Heart right ventricle (tissue), 16 donors: ENCODE measurements at regions of chr20 and their contacts with region 1.

Region 1: GRCh38 chr20:51492167-51493092 is 50.1 kb downstream of the NFATC2 start:
- DNase-seq: peak; percentile 68 to 82
- ATAC-seq: peak; percentile 67 to 92 (median 86)
- H3K4me3 ChIP-seq: peak overlapping the region in 9 of 10 donors; percentile 23 to 50 (median 39)
- H3K27ac ChIP-seq: peak overlapping the region in 8 of 10 donors; percentile 1 to 55 (median 40)
- H3K4me1 ChIP-seq: peaks cover 9 to 56% (median 25%) of the 10 kb centered on the region in 9 donors
- H3K27me3 ChIP-seq: peaks cover 0 to 11% (median 0%) of the 10 kb centered on the region in 7 donors
- CTCF ChIP-seq: no peak

Region 2: DNA sequence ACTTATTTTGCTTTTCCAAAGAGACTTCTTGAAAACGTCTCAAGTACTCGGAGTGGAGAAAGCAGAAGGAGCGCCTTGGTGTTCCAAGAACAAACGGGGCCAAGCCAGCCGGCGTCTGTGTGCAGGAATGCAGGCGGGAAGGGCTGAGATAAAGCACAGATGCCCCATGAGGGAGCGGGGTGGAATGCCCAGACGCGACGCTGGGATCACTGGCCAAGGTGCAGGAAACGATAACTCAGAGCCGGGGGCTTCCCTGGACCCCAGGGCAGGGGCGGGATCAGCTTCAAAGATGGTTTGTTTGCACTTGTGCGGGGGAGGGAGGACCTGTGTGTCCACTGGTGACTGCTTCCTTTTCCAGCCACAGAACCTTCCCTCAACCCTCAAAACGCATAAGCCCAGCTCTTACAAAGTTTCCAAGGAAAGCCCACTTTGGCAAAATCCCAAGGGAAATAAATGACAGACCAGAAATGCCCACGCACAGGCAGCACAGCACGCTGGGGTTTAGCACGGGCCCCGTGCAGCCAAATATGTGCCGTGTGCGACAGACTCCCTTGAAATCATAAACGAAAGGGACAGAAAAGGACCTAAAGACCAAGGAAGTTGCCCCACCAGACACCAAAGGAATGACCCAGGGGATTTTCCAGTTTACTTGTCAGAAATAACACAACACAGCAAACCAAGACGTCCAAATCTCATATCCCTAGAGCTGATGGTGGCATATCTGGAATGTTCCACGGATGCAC is 63.9 kb before region 1 on chr20:
- intact Hi-C with region 1: no loop called
- DNase-seq: peak; percentile 53
- ATAC-seq: peak; percentile 52 to 82 (median 68)
- H3K4me3 ChIP-seq: peak overlapping the region in 4 of 10 donors; percentile 11 to 31 (median 20)
- H3K27ac ChIP-seq: peak overlapping the region in 2 of 10 donors; percentile 9 to 14
- H3K4me1 ChIP-seq: peaks cover 0 to 21% (median 16%) of the 10 kb centered on the region in 9 donors
- H3K27me3 ChIP-seq: no peaks in the 10 kb centered on the region
- CTCF ChIP-seq: no peak

Region 3: GRCh38 chr20:51525241-51526129 is 33.1 kb after region 1 on chr20:
- intact Hi-C with region 1: no loop called
- DNase-seq: peak in 1 of 2 donors; percentile 40
- ATAC-seq: peak; percentile 48 to 83 (median 70)
- H3K4me3 ChIP-seq: peak overlapping the region in 6 of 10 donors; percentile 2 to 27 (median 18)
- H3K27ac ChIP-seq: peak overlapping the region in 5 of 10 donors; percentile 9 to 55 (median 25)
- H3K4me1 ChIP-seq: peaks cover 0 to 44% (median 24%) of the 10 kb centered on the region in 9 donors
- H3K27me3 ChIP-seq: no peaks in the 10 kb centered on the region
- CTCF ChIP-seq: no peak

Region 4: GRCh38 chr20:51562332-51563155 is 70.1 kb after region 1 on chr20:
- intact Hi-C with region 1: loop called in 1 of 10 experiments (anchors 5 kb)
- DNase-seq: peak; percentile 79 to 94
- ATAC-seq: peak; percentile 75 to 91 (median 84)
- H3K4me3 ChIP-seq: peak overlapping the region; percentile 19 to 72 (median 59)
- H3K27ac ChIP-seq: peak overlapping the region; percentile 66 to 96 (median 86)
- H3K4me1 ChIP-seq: peaks cover 8 to 63% (median 45%) of the 10 kb centered on the region in 9 donors
- H3K27me3 ChIP-seq: peaks cover 0 to 69% (median 0%) of the 10 kb centered on the region in 7 donors
- CTCF ChIP-seq: peak in 7 of 9 donors; percentile 15 to 64 (median 39)

Region 5: GRCh38 chr20:51595058-51595532 is 102.7 kb after region 1 on chr20:
- intact Hi-C with region 1: no loop called
- DNase-seq: peak; percentile 83 to 90
- ATAC-seq: peak; percentile 93 to 99 (median 98)
- H3K4me3 ChIP-seq: no peak overlapping the region
- H3K27ac ChIP-seq: peak overlapping the region in 1 of 10 donors; percentile 20
- H3K4me1 ChIP-seq: peaks cover 0 to 15% (median 9%) of the 10 kb centered on the region in 9 donors
- H3K27me3 ChIP-seq: no peaks in the 10 kb centered on the region
- CTCF ChIP-seq: peak; percentile 71 to 93 (median 90)